ENCODE measurements at regions of chr7 and their contacts with region 1.

Region 1: GRCh38 chr7:32154797-32155196 is 84.6 kb upstream of the PDE1C start:
- DNase-seq: peak in 5 of 10 donors; percentile 31 to 85 (median 35)

Region 2: GRCh38 chr7:32079510-32079909 is 75.3 kb before region 1 on chr7:
- intact Hi-C with region 1: loop called (anchors 5 kb)
- DNase-seq: peak in 1 of 10 donors; percentile 81

Measured in posterior cingulate gyrus (tissue), 11 donors.